ENCODE measurements at regions of chr19 and their contacts with region 1.

Region 1: DNA sequence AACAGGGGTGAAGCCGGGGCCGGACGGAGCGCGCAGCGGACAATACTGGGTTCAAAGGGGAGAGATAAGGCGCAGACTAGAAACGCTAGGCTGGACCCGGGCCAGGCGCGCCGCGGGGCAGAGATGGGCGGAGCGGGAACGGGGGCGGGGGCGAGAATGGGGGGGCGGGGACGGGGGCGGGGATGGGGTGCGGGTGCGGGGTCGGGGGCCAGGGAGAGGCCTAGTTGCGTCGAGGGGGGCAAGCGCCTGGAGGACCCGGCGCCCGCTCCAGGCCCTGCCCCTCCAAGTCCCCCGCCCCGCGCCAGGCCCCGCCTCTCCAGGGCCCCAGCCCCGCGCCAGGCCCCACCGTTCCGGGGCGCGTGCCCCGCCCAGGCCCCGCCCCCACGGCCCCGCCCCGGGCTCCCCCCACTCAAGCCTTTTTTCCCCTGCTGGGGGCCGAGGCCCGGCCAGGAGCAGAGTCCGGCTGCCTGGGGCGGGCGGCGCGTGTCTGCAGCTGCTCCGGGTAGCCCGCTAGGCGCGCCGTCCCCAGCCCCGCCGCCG is at the start of gene CERS4:
- DNase-seq: peak; percentile 64
- H3K4me3 Mint-ChIP-seq: peak within 1 kb of the TSS; percentile 88
- H3K27ac Mint-ChIP-seq: peak within 1 kb of the TSS; percentile 87
- H3K4me1 Mint-ChIP-seq: peaks cover 19% of the 10 kb centered on the region
- H3K27me3 Mint-ChIP-seq: peaks cover 5% of the 10 kb centered on the region
- total RNA-seq, gene CERS4: 26.4 and 29.7 TPM in 2 replicates

Region 2: GRCh38 chr19:8167985-8168384 is 41.0 kb before region 1 on chr19:
- intact Hi-C with region 1: no loop called
- DNase-seq: no peak
- H3K4me3 Mint-ChIP-seq: no peak overlapping the region
- H3K27ac Mint-ChIP-seq: no peak overlapping the region
- H3K4me1 Mint-ChIP-seq: no peaks in the 10 kb centered on the region
- H3K27me3 Mint-ChIP-seq: peaks cover 6% of the 10 kb centered on the region

Region 3: GRCh38 chr19:8194528-8195267 is 14.3 kb before region 1 on chr19:
- intact Hi-C with region 1: loop called (anchors 1 kb)
- DNase-seq: peak; percentile 36
- H3K4me3 Mint-ChIP-seq: peak overlapping the region; percentile 72
- H3K27ac Mint-ChIP-seq: peak overlapping the region; percentile 98
- H3K4me1 Mint-ChIP-seq: peaks cover 49% of the 10 kb centered on the region
- H3K27me3 Mint-ChIP-seq: no peaks in the 10 kb centered on the region

Region 4: DNA sequence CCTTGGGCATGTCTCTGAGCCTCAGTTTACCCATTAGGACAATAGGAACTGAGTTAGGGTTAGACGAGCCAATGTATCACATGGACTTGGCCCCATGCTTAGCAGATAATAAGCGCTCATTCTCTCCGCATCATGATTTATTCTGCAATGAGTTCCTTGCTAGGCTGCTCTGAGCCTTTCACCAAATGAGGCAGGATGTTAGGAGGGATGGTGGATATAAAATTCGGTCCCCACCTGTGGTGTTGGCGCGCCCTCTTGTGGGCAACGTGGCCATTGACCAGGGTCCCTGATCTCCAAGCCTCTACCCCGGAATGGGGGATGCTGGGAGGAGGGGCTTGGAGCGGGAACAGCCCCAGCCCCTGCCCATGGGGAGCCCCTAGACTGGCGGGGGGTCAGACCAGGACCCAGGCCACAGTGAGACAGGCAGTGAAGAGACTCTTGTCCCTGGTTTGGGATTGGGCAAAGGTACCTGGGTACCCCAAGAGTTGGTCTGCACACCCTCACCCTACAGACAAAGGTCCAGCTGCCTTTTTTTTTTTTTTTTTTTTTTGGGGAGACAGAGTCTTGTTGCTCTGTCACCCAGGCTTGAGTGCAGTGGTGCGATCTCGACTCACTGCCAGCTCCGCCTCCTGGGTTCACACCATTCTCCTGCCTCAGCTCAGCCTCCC is 44.1 kb after region 1 on chr19:
- intact Hi-C with region 1: loop called (anchors 2 kb)
- DNase-seq: peak; percentile 71
- H3K4me3 Mint-ChIP-seq: no peak overlapping the region
- H3K27ac Mint-ChIP-seq: no peak overlapping the region
- H3K4me1 Mint-ChIP-seq: no peaks in the 10 kb centered on the region
- H3K27me3 Mint-ChIP-seq: no peaks in the 10 kb centered on the region

Measured in activated T-helper 1 cell treated with anti-CD3 and anti-CD28 coated beads, Interleukin-12 subunit alpha, Interleukin-12 subunit beta, Interleukin-2, Interleukin-4 antibody, amounts not matched to agents 30 ng/mL and 10 ng/mL and 1 ng/mL, durations not matched to agents 14 hours and 24 hours and 36 hours (primary cell).